ENCODE measurements at regions of chr15 and their contacts with region 1.

Region 1: GRCh38 chr15:65286704-65287519 is at the start of gene PARP16:
- DNase-seq: peak; percentile 92 to 97 (median 95)
- H3K4me3 ChIP-seq: peak within 1 kb of the TSS; percentile 35 to 87 (median 69)
- H3K27ac ChIP-seq: peak within 1 kb of the TSS; percentile 25 to 81
- H3K4me1 ChIP-seq: peaks cover 4 to 24% (median 18%) of the 10 kb centered on the region in 4 experiments
- H3K27me3 ChIP-seq: no peaks in the 10 kb centered on the region

Region 2: GRCh38 chr15:65184868-65185738 is 101.8 kb before region 1 on chr15 and contains the start of gene CLPX:
- CTCF ChIA-PET with region 1: interaction called, 4 read pairs
- POLR2A ChIA-PET with region 1: interaction called, 15 read pairs
- DNase-seq: peak; percentile 95 to 98 (median 97)
- H3K4me3 ChIP-seq: peak within 1 kb of the TSS; percentile 83 to 96 (median 91)
- H3K27ac ChIP-seq: peak within 1 kb of the TSS; percentile 86 to 94
- H3K4me1 ChIP-seq: peaks cover 9 to 24% (median 19%) of the 10 kb centered on the region in 4 experiments
- H3K27me3 ChIP-seq: no peaks in the 10 kb centered on the region

Region 3: DNA sequence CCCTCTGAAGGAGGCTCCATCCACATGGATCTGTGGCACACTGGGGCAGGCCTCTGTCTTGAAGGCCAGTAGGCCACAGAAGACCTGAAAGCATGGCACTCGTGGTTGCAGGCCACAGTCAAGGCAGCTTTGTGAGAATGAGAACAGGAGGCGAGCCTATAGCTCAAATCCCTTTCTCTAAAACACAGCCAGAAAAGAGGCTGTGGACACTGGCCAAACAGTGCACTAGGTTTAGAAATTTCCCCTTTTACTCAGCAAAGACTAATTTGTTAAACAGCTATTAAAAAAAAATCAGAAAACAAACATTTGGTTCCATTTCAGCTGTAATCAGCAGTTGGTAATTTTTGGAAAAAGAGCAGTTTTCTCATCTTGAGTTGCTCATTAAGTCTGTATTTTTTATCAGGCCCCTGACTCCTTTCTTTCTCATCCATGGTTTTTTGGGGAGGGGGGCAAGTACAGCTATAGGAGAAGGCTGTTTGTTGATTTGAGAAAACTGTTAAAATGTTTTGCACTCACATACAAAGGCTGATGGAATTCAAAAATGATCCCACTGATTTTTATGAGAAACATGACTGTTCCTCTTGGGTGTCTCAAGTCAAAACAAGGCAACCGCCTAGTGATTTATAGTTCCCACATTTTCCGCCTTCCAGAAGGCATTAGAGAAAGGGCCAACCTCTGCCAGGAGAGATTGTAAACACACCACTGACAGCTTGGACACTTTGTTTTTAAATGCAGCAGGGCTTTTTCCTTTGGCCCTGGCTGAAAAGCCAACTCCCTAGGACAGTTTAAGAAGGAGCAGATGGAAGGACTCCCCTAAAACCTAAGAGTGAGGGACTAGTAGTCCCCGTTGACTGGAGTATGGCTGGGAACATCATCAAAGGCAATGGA is 28.3 kb before region 1 on chr15:
- CTCF ChIA-PET with region 1: no interaction called
- POLR2A ChIA-PET with region 1: no interaction called
- DNase-seq: peak; percentile 55 to 83 (median 74)
- H3K4me3 ChIP-seq: peak overlapping the region in 1 of 7 experiments; percentile 31
- H3K27ac ChIP-seq: peak overlapping the region; percentile 2 to 76
- H3K4me1 ChIP-seq: peaks cover 5 to 63% (median 34%) of the 10 kb centered on the region in 4 experiments
- H3K27me3 ChIP-seq: no peaks in the 10 kb centered on the region

Measured in common myeloid progenitor, CD34-positive (primary cell).